ENCODE measurements at regions of chr2 and their contacts with region 1.

Region 1: GRCh38 chr2:80499095-80499494 is 194.5 kb upstream of the LRRTM1 start:
- DNase-seq: peak; percentile 28
- H3K4me3 ChIP-seq: no peak overlapping the region
- H3K27ac ChIP-seq: no peak overlapping the region
- H3K4me1 ChIP-seq: no peaks in the 10 kb centered on the region
- H3K27me3 ChIP-seq: no peaks in the 10 kb centered on the region
- CTCF ChIP-seq: peak; percentile 37 to 52 (median 40)
- EP300 ChIP-seq: no peak
- POLR2A ChIP-seq: no peak

Region 2: GRCh38 chr2:79960519-79960918 is 538.6 kb before region 1 on chr2:
- in situ Hi-C with region 1: no loop called
- intact Hi-C with region 1: no loop called
- DNase-seq: peak; percentile 50
- H3K4me3 ChIP-seq: no peak overlapping the region
- H3K27ac ChIP-seq: peak overlapping the region; percentile 44 to 64 (median 52)
- H3K4me1 ChIP-seq: peaks cover 0 to 18% (median 4%) of the 10 kb centered on the region in 4 donors
- H3K27me3 ChIP-seq: no peaks in the 10 kb centered on the region
- CTCF ChIP-seq: no peak
- EP300 ChIP-seq: no peak
- POLR2A ChIP-seq: no peak

Region 3: GRCh38 chr2:80510716-80511115 is 11.6 kb after region 1 on chr2:
- in situ Hi-C with region 1: no loop called
- intact Hi-C with region 1: loop called (anchors 2 kb)
- DNase-seq: no peak
- H3K4me3 ChIP-seq: no peak overlapping the region
- H3K27ac ChIP-seq: no peak overlapping the region
- H3K4me1 ChIP-seq: no peaks in the 10 kb centered on the region
- H3K27me3 ChIP-seq: no peaks in the 10 kb centered on the region
- CTCF ChIP-seq: no peak
- EP300 ChIP-seq: no peak
- POLR2A ChIP-seq: no peak

Region 4: DNA sequence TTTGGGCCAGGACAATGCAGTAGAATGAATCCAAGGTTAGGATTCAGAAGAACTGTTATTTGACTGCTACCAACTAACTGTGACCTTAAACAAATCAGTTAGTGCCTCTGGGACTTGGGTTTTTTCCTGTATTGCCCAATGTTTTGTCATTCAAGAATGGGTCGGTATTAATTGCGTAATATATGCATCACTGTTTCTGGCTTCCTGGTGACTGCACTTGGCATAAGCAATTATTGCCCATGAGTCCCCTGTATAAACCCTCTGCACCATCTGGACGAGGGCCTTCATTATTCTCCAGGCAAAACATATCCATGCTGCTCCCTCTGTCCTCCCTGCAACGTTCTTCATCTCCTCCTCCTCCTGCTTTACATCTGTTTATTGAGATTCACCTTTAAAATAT is 61.2 kb after region 1 on chr2:
- in situ Hi-C with region 1: no loop called
- intact Hi-C with region 1: no loop called
- DNase-seq: no peak
- H3K4me3 ChIP-seq: no peak overlapping the region
- H3K27ac ChIP-seq: no peak overlapping the region
- H3K4me1 ChIP-seq: no peaks in the 10 kb centered on the region
- H3K27me3 ChIP-seq: no peaks in the 10 kb centered on the region
- CTCF ChIP-seq: no peak
- EP300 ChIP-seq: no peak
- POLR2A ChIP-seq: no peak

Region 5: DNA sequence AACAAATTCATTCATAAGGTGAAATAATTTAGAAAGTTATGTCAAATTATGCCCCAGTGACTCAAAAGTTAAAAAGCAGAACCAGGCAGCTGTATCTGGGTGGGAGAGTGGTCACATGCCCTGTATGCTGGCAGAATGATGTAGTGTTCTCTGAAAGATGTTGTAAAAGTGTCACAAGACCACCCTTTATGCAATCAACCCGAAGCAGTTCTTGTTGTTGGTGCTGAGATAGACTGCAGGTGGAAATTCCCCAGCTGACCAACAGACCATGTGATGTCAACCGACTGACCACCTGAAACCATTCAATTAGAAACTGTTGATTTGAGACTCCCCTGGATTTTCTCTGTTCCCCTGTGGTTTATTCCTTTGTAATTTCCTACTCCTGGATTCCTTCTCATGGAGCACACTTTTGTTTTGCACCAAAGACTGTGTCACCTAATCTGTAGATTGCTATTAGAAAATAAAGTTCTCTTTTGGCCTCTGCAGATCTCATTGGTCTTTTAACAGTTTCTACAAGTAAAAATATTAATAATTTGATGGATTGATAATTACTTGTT is 1146.7 kb after region 1 on chr2:
- in situ Hi-C with region 1: no loop called
- intact Hi-C with region 1: no loop called
- DNase-seq: no peak
- H3K4me3 ChIP-seq: no peak overlapping the region
- H3K27ac ChIP-seq: no peak overlapping the region
- H3K4me1 ChIP-seq: no peaks in the 10 kb centered on the region
- H3K27me3 ChIP-seq: no peaks in the 10 kb centered on the region
- CTCF ChIP-seq: no peak
- EP300 ChIP-seq: no peak
- POLR2A ChIP-seq: no peak